ENCODE measurements at regions of chr3 and their contacts with region 1.

Region 1: GRCh38 chr3:188954590-188955208 is 217.1 kb upstream of the TPRG1 start:
- DNase-seq: peak; percentile 47 to 84 (median 71)
- ATAC-seq: peak; percentile 57
- H3K4me3 ChIP-seq: no peak overlapping the region
- H3K4me3 Mint-ChIP-seq: no peak overlapping the region
- H3K27ac ChIP-seq: no peak overlapping the region
- H3K27ac Mint-ChIP-seq: no peak overlapping the region
- H3K4me1 ChIP-seq: no peaks in the 10 kb centered on the region
- H3K4me1 Mint-ChIP-seq: peaks cover 5% of the 10 kb centered on the region
- H3K27me3 ChIP-seq: no peaks in the 10 kb centered on the region
- H3K27me3 Mint-ChIP-seq: no peaks in the 10 kb centered on the region
- CTCF ChIP-seq: peak; percentile 64

Region 2: DNA sequence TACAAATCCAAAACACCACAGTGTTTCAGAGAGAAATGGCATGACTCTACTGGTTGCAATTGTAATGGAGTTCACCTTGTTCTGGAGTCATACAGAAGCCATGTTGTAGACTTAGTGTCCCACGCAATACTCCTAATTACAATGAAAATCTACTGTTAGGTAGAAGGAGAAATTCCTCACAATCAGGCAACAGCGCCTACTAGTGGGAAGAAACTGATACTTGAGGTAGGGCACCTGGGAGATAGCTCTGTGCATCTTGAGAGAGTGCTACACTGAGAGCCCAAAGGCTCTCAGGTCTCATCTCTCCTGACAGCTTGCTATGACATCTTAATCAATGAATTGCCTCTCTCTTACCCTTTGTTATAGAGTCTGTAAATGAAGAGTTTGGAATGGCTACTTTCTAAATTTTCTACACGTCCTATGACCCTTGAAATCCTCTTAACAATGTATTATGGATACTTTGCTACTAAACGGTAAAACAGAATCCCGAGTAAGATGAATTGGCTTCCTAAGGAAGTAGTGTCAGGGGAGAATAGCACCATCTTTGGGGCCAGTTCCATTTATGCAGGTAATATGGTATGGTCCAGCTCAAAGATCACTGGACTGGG is 205.6 kb before region 1 on chr3:
- CTCF ChIA-PET with region 1: interaction called, 16 read pairs
- POLR2A ChIA-PET with region 1: no interaction called
- intact Hi-C with region 1: loop called (anchors 1 to 5 kb)
- DNase-seq: peak; percentile 26 to 77 (median 59)
- ATAC-seq: peak; percentile 73
- H3K4me3 ChIP-seq: no peak overlapping the region
- H3K4me3 Mint-ChIP-seq: no peak overlapping the region
- H3K27ac ChIP-seq: no peak overlapping the region
- H3K27ac Mint-ChIP-seq: no peak overlapping the region
- H3K4me1 ChIP-seq: no peaks in the 10 kb centered on the region
- H3K4me1 Mint-ChIP-seq: peaks cover 2% of the 10 kb centered on the region
- H3K27me3 ChIP-seq: no peaks in the 10 kb centered on the region
- H3K27me3 Mint-ChIP-seq: no peaks in the 10 kb centered on the region
- CTCF ChIP-seq: peak; percentile 76

Region 3: GRCh38 chr3:188756241-188756640 is 198.5 kb before region 1 on chr3:
- CTCF ChIA-PET with region 1: interaction called, 12 read pairs
- POLR2A ChIA-PET with region 1: no interaction called
- intact Hi-C with region 1: no loop called
- DNase-seq: no peak
- ATAC-seq: no peak
- H3K4me3 ChIP-seq: no peak overlapping the region
- H3K4me3 Mint-ChIP-seq: no peak overlapping the region
- H3K27ac ChIP-seq: no peak overlapping the region
- H3K27ac Mint-ChIP-seq: no peak overlapping the region
- H3K4me1 ChIP-seq: no peaks in the 10 kb centered on the region
- H3K4me1 Mint-ChIP-seq: peaks cover 2% of the 10 kb centered on the region
- H3K27me3 ChIP-seq: no peaks in the 10 kb centered on the region
- H3K27me3 Mint-ChIP-seq: no peaks in the 10 kb centered on the region
- CTCF ChIP-seq: no peak

Region 4: GRCh38 chr3:188830893-188831292 is 123.8 kb before region 1 on chr3:
- CTCF ChIA-PET with region 1: interaction called, 6 read pairs
- POLR2A ChIA-PET with region 1: no interaction called
- intact Hi-C with region 1: loop called in 1 of 2 experiments (anchors 1 kb)
- DNase-seq: peak in 1 of 9 experiments; percentile 9
- ATAC-seq: no peak
- H3K4me3 ChIP-seq: no peak overlapping the region
- H3K4me3 Mint-ChIP-seq: no peak overlapping the region
- H3K27ac ChIP-seq: no peak overlapping the region
- H3K27ac Mint-ChIP-seq: no peak overlapping the region
- H3K4me1 ChIP-seq: peaks cover 8% of the 10 kb centered on the region
- H3K4me1 Mint-ChIP-seq: peaks cover 14% of the 10 kb centered on the region
- H3K27me3 ChIP-seq: no peaks in the 10 kb centered on the region
- H3K27me3 Mint-ChIP-seq: no peaks in the 10 kb centered on the region
- CTCF ChIP-seq: no peak

Region 5: GRCh38 chr3:188914552-188914951 is 40.1 kb before region 1 on chr3:
- CTCF ChIA-PET with region 1: interaction called, 16 read pairs
- POLR2A ChIA-PET with region 1: no interaction called
- intact Hi-C with region 1: no loop called
- DNase-seq: peak in 1 of 9 experiments; percentile 5
- ATAC-seq: no peak
- H3K4me3 ChIP-seq: no peak overlapping the region
- H3K4me3 Mint-ChIP-seq: no peak overlapping the region
- H3K27ac ChIP-seq: no peak overlapping the region
- H3K27ac Mint-ChIP-seq: peak overlapping the region; percentile 15
- H3K4me1 ChIP-seq: peaks cover 23% of the 10 kb centered on the region
- H3K4me1 Mint-ChIP-seq: peaks cover 34% of the 10 kb centered on the region
- H3K27me3 ChIP-seq: no peaks in the 10 kb centered on the region
- H3K27me3 Mint-ChIP-seq: no peaks in the 10 kb centered on the region
- CTCF ChIP-seq: no peak

Region 6: GRCh38 chr3:188941103-188941502 is 13.6 kb before region 1 on chr3:
- CTCF ChIA-PET with region 1: interaction called, 49 read pairs
- POLR2A ChIA-PET with region 1: no interaction called
- intact Hi-C with region 1: no loop called
- DNase-seq: peak in 1 of 9 experiments; percentile 16
- ATAC-seq: no peak
- H3K4me3 ChIP-seq: no peak overlapping the region
- H3K4me3 Mint-ChIP-seq: no peak overlapping the region
- H3K27ac ChIP-seq: no peak overlapping the region
- H3K27ac Mint-ChIP-seq: no peak overlapping the region
- H3K4me1 ChIP-seq: no peaks in the 10 kb centered on the region
- H3K4me1 Mint-ChIP-seq: no peaks in the 10 kb centered on the region
- H3K27me3 ChIP-seq: no peaks in the 10 kb centered on the region
- H3K27me3 Mint-ChIP-seq: no peaks in the 10 kb centered on the region
- CTCF ChIP-seq: no peak

Region 7: DNA sequence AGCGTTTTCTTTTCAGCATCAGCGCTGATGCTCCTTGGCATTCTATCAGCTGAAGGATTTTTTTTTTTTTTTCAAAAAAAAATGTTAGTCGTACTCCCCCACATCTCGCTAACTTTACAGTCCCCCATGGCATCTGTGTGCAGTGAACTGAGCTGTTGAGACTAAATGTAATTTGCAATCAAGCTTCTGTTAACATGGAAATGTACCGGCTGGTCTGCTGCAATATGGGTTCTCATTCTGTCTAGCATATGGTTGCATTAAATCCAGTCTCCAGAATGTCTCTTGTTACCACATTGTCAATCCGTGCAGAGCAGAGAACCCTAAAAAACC is 184.9 kb after region 1 on chr3:
- CTCF ChIA-PET with region 1: interaction called, 33 read pairs
- POLR2A ChIA-PET with region 1: no interaction called
- intact Hi-C with region 1: loop called in 1 of 2 experiments (anchors 1 kb)
- DNase-seq: no peak
- ATAC-seq: no peak
- H3K4me3 ChIP-seq: no peak overlapping the region
- H3K4me3 Mint-ChIP-seq: no peak overlapping the region
- H3K27ac ChIP-seq: no peak overlapping the region
- H3K27ac Mint-ChIP-seq: no peak overlapping the region
- H3K4me1 ChIP-seq: peaks cover 11% of the 10 kb centered on the region
- H3K4me1 Mint-ChIP-seq: peaks cover 21% of the 10 kb centered on the region
- H3K27me3 ChIP-seq: no peaks in the 10 kb centered on the region
- H3K27me3 Mint-ChIP-seq: no peaks in the 10 kb centered on the region
- CTCF ChIP-seq: no peak

Region 8: GRCh38 chr3:189517981-189518380 is 563.3 kb after region 1 on chr3:
- CTCF ChIA-PET with region 1: no interaction called
- POLR2A ChIA-PET with region 1: no interaction called
- intact Hi-C with region 1: no loop called
- DNase-seq: no peak
- ATAC-seq: no peak
- H3K4me3 ChIP-seq: no peak overlapping the region
- H3K4me3 Mint-ChIP-seq: no peak overlapping the region
- H3K27ac ChIP-seq: no peak overlapping the region
- H3K27ac Mint-ChIP-seq: no peak overlapping the region
- H3K4me1 ChIP-seq: no peaks in the 10 kb centered on the region
- H3K4me1 Mint-ChIP-seq: no peaks in the 10 kb centered on the region
- H3K27me3 ChIP-seq: no peaks in the 10 kb centered on the region
- H3K27me3 Mint-ChIP-seq: no peaks in the 10 kb centered on the region
- CTCF ChIP-seq: no peak

Measured in CD8-positive, alpha-beta T cell (primary cell).